RWPE1 (cell line): ENCODE measurements at regions of chr21 and their contacts with region 1.

Region 1: DNA sequence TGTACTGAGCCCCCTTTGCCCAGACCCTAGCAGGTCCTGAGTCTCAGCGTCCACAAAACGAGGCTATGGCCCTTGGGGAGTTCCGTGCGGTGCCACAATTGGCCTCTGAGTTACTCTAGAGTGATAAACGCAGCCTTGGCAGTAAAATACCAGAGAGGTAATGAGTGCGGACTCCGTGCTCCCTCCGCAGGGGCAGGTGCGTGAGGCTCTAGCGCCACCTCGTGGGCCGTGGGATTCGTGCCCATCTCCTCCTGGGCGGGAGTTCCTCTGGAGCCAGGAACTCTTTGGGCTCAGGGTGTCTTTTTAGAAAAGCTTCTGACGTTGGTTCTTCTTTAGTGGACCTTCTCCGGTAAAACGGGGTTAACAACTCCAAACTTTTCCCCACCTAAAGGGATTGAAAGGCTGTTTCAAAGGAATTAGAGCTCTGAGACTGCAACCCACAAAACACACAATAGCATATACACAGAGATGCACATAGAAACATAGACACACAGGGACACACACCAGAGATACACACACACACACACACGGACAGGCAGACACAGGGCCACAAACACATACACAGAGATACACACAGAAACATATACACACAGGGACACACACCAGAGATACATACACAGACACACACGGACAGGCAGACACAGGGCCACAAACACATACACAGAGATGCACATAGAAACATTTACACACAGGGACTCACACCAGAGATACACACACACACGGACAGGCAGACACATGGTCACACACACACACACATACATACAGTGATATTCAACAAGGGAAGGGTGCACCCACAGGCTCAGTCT is 99.4 kb downstream of the KCNJ15 start:
- DNase-seq: peak; percentile 83
- H3K27ac ChIP-seq: peak overlapping the region; percentile 16; the same call in 1 of the 2 replicates
- CTCF ChIP-seq: peak; percentile 96

Region 2: GRCh38 chr21:37711836-37712568 is 644.2 kb before region 1 on chr21:
- CTCF ChIA-PET with region 1: interaction called, 12 read pairs
- POLR2A ChIA-PET with region 1: no interaction called
- DNase-seq: peak; percentile 70
- H3K27ac ChIP-seq: no peak overlapping the region
- CTCF ChIP-seq: peak; percentile 84

Region 3: GRCh38 chr21:38170280-38170679 is 185.9 kb before region 1 on chr21:
- CTCF ChIA-PET with region 1: interaction called, 25 read pairs
- POLR2A ChIA-PET with region 1: interaction called, 3 read pairs
- DNase-seq: peak; percentile 27
- H3K27ac ChIP-seq: no peak overlapping the region
- CTCF ChIP-seq: peak; percentile 31; the same call in 1 of the 2 replicates

Region 4: GRCh38 chr21:38561613-38562581 is 205.7 kb after region 1 on chr21:
- CTCF ChIA-PET with region 1: no interaction called
- POLR2A ChIA-PET with region 1: no interaction called
- DNase-seq: no peak
- H3K27ac ChIP-seq: no peak overlapping the region
- CTCF ChIP-seq: no peak